Dendritic cell treated with granulocyte-macrophage colony-stimulating factor and Interleukin-4, amounts not matched to agents 40 ng/mL and 50 ng/mL, for 4 days (primary cell): ENCODE measurements at regions of chr1 and their contacts with region 1.

Region 1: GRCh38 chr1:25858906-25859789 is at the start of gene AUNIP:
- H3K4me3 Mint-ChIP-seq: peak within 1 kb of the TSS; percentile 94
- H3K27ac Mint-ChIP-seq: peak within 1 kb of the TSS; percentile 98
- H3K4me1 Mint-ChIP-seq: peaks cover 41% of the 10 kb centered on the region
- H3K27me3 Mint-ChIP-seq: no peaks in the 10 kb centered on the region

Region 2: GRCh38 chr1:25430666-25431505 is 428.3 kb before region 1 on chr1 and contains the start of gene MACO1:
- intact Hi-C with region 1: loop called (anchors 5 kb)
- H3K4me3 Mint-ChIP-seq: peak within 1 kb of the TSS; percentile 87
- H3K27ac Mint-ChIP-seq: peak within 1 kb of the TSS; percentile 94
- H3K4me1 Mint-ChIP-seq: peaks cover 25% of the 10 kb centered on the region
- H3K27me3 Mint-ChIP-seq: peaks cover 4% of the 10 kb centered on the region

Region 3: DNA sequence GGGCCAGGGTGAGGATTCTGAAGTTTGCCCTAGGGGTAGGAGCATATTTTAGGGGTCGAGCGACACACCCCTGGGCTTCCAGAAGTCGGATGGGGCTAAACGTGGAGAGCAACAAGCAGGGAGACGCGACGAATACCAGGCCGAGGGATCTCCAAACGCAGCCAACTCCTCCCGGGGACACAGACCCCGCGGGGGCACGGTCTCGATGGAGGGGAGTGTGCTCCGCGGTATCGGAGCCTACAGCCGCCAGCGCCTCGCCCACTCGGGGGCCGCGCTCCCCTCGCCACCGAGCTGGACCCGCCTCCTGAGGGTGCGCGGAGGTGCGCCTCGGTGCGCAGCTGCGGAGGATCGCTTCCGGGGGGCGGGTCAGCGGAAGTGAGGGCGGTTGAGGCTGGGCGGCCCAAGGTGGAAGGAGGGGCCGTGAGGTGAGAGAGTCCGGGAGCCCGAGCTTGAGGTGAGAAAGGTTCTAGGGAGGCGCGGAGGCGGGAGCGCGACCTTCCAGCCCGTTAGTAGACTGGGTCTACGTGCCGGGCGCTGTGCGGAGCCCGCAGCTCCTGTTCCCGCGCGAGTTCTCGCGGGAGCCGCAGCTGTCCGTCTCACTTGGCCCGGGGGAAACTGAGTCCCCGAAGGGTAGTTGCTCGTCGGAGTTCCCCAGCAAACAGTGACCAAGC is 39.4 kb before region 1 on chr1 and contains the start of gene MTFR1L:
- intact Hi-C with region 1: loop called (anchors 1 kb)
- H3K4me3 Mint-ChIP-seq: peak within 1 kb of the TSS; percentile 87
- H3K27ac Mint-ChIP-seq: peak within 1 kb of the TSS; percentile 82
- H3K4me1 Mint-ChIP-seq: peaks cover 53% of the 10 kb centered on the region
- H3K27me3 Mint-ChIP-seq: no peaks in the 10 kb centered on the region

Region 4: DNA sequence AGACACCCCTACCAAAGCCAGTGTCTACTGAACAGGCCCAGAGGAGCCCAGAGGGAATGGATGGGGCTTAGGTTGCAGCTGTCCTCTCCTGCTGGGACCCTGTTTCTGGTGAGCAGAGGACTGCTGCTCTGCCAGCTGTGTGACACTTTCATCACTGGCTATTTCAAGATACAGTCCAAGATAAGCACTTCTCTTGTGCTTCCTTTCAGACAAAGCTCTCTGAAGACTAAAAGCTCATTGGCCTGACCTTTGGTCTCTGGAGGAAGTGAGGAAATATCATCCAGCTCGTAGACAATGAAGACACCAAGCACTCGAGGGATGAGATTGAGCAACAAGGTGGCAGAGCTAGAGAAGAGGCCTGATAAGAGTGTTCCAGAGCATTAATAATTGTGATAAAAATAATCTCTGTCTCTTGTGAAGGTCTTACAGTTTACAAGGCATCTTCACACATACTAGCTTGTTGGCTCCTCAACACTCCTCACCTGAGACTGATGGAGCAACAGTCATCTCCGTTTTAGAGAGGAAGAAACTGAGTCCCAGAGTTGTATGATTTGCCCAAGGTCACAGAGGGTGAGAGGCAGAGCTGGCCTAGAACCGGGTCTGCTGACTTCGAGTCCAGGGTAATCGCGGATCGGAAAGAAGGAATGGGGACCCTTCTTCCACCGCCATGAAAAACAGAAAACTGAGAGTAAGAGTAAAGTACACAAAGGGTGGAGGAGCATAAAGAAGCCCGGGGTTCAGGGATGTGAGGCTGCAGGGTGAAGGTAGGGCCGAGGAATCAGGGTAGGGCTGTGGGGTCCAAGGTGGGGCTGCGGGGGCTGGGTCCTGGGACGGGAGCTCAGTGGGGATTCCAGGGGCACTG is 138.0 kb after region 1 on chr1:
- intact Hi-C with region 1: no loop called
- H3K4me3 Mint-ChIP-seq: peak overlapping the region; percentile 97
- H3K27ac Mint-ChIP-seq: peak overlapping the region; percentile 97
- H3K4me1 Mint-ChIP-seq: peaks cover 45% of the 10 kb centered on the region
- H3K27me3 Mint-ChIP-seq: no peaks in the 10 kb centered on the region